AG04449 (cell line): ENCODE measurements at regions of chr3 and their contacts with region 1.

Region 1: DNA sequence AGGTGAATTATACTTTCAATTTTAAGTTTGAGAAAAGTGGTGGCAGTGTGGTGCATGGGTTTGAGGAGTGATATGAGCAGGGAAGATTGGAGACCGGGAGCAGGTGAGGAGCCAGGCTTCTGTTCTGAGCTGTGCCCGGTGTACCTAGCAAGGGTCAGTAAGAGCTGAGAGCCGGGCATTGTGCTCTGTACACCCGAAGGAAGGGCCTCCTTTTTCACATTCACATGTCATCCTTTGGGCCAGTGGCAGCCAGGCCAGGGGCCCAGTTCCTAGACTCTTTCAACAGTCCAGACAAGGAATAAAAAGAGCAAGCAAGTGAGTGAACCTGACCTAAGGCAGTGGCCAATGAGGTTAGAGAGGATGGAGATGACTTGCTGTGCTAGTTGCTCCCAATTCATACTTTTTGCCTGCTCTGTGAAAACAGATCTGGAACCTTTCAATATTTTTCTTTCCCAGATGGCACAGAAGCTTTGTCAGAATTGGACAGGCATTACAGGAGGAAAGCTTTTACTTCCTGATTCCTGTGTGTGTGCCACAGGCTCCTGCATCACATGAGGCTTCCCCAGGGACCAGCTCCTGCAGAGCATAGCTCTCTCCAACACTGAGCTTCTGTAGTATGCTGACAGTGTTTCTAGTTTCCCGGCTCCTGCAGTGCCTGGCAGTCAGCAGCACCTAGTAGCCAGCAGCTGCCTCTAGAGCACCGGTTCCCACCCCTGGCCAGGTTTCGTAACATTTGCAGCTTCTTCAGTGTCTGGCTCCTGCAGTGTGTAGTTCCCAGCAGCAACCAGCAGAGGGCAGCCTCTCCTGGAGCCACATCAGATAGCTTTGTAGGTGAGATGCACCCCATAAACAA is 5.3 kb upstream of the TRA2B start:
- DNase-seq: peak; percentile 23
- H3K4me3 ChIP-seq: no peak overlapping the region
- CTCF ChIP-seq: peak; percentile 96

Region 2: DNA sequence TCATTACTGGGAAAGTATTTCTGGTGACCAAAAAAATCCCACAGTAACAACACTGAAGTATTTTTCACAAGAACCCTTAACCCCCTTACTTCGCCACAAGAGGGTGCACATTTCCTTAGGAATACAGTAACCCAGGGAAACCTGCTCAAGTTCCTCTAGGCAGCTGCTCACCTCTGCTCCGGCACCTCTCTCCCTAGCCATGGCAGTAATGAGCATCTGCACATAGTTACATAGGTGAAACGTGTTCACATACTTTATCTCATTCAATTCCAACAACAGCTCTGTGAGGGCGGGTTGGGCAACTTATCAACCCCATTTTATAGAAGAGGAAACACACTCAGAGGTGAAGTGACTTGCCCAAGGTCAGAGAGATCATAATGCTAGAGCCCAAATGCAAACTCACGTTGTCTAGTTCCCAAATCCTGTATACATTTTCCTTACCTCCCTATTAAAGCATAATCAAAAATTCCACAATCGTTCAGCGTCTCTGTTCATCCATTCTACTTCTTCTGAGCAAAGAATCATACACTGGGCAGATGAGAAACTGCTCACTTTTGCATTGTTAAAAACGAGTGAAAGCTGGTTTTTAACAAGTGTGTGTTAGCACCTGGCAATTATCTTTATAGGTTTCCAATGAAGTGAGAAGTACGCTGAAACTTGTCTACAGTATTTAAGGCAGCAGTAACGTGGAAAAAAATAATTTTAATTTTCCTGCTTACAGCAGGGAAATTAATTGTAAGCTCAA is 209.0 kb before region 1 on chr3:
- CTCF ChIA-PET with region 1: interaction called, 30 read pairs
- POLR2A ChIA-PET with region 1: no interaction called
- DNase-seq: no peak
- H3K4me3 ChIP-seq: no peak overlapping the region
- CTCF ChIP-seq: peak; percentile 46

Region 3: DNA sequence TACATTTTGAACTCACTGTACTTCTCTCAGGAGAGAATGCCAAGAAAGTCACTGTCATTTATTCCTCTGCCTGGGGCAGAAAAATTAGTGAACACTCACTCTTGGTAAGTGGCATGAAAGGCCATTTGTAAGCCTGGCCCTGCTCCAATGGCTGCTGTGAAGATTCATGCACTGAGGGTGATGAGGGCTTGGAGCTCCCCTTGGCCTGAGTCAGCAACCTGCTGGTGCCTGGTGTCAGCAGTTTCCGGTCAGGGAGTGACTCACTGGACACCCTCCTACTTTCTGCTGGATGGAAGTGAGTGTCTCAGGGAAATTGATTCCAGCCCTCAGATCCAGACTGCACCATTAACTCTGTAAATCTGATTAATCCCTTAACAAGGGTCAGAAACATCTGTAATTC is 42.9 kb before region 1 on chr3:
- CTCF ChIA-PET with region 1: no interaction called
- POLR2A ChIA-PET with region 1: no interaction called
- DNase-seq: peak; percentile 57
- H3K4me3 ChIP-seq: no peak overlapping the region
- CTCF ChIP-seq: no peak

Region 4: DNA sequence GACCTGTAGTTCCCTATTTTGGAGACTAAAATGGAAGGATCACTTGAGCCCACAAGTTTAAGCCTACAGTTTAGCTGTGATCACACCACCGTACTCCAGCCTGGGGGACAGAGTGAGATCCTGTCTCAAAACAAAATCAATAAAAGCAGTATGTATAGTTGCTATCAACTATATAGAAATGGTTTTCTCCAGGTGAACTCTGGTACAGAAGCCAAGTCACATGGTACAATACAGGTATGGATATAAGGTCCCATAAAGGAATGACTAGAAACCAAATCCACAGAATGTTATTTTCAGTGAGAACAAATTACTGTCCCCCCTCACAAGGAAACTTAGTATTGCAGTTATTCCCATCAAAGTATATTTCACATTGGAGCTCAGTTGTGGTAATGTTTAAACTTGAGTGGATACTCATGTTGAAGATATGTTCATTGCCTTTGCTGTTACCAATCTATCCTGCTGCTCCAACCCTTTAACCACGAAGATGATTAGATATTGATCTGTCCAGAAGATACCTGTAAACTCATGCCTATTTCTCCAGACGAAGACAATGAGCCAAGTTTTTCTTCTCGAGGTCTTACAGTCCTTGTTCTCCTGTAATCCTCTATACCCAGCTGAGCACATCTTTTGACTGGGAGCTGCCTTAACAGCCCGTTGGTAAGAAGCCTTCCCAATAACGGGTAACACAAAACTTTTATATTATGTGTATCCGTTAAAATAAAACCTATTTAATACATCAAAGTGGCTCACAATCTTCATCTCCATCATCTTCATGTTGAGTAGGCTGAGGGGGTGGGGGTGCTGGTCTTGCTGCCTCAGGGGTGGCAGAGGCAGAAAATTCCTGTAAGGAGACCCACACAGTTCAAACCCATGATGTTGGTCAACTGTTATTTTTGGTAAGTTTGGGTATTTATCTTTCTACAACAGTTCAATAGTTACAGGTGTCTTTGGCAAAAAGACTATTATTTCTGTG is 29.9 kb before region 1 on chr3:
- CTCF ChIA-PET with region 1: interaction called, 15 read pairs
- POLR2A ChIA-PET with region 1: no interaction called
- DNase-seq: no peak
- H3K4me3 ChIP-seq: no peak overlapping the region
- CTCF ChIP-seq: no peak

Region 5: DNA sequence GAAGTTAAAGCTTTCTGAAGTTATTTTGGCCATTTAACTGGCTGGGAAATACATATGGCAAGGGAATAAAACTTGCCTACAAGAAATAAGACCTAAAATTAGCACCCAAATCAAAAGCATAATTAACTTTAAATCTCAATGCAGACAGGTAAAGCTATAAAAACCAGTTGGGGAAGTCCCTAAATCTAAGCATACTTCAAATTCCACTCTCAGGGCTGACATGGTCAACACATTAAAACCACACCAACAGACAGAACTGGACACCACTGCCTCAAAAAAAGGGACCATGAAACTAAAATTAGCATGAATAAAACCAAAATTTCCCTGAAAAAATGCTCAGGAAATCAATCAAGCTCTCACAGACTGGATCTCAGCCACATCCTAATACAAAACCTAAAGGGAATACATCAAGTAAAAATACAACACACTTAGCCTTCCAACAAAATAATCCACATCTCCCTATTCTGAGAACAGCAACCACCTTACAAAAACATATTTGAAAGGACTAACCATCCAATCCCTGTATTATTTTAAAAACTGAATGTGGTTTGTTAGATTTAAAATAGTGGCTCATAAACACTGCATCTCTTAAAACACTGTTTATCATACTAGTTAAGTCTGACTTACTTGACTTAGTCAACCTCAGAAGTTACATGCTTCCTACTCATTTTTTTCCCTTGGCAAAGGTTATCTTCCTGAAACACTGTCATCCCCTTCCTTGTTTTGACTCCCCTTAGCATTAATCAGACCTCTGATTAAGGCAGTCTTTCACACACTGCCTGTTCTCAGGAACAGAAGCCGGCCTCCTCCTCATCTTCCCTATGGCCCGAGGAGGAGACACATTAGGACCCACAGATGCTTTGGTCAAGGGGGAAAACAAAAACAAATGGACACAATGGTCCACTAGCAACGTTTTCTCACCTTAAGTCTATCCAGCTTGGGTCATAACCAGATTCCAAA is 13.7 kb before region 1 on chr3:
- CTCF ChIA-PET with region 1: interaction called, 33 read pairs
- POLR2A ChIA-PET with region 1: no interaction called
- DNase-seq: no peak
- H3K4me3 ChIP-seq: no peak overlapping the region
- CTCF ChIP-seq: no peak

Region 6: GRCh38 chr3:185968168-185968567 is 25.0 kb after region 1 on chr3:
- CTCF ChIA-PET with region 1: interaction called, 18 read pairs
- POLR2A ChIA-PET with region 1: no interaction called
- DNase-seq: no peak
- H3K4me3 ChIP-seq: no peak overlapping the region
- CTCF ChIP-seq: no peak

Region 7: DNA sequence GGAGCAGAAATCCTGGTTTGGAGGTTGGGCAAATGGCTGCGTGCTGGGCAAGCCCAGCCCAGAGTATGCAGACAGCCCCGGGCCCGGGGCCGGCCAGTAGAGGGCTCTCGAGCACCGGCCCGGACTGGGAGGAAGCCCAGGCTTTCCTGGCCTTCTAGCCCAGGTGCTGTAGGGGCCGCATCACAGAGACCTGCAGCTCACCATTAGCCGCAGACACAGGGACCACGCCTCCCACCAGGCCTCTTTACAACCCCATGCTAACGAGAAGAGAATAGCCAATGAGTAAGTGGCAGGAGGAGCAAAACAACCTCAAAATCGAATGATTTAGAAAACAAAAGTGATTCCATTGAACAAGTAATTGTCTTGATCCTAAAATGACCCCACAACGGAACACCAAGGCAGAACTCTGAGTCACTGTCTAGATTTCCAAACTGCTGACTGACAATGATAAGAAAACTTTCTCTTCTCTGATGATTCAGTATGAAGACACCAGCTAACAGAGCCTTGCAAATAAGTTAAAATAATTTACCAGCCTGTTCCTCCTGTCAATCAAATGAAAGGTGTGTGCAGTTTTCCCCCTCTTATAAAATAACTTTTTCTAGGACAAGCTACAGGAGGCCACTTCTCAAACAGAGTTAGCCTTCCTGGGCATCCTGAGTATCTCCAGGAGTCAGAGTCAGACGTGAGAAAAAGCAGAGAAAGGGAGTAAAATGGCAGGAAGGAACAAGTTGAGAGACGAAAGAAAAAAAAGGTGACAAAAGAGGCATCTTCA is 316.7 kb after region 1 on chr3:
- CTCF ChIA-PET with region 1: interaction called, 11 read pairs
- POLR2A ChIA-PET with region 1: no interaction called
- DNase-seq: peak; percentile 36
- H3K4me3 ChIP-seq: no peak overlapping the region
- CTCF ChIP-seq: peak; percentile 86